Mammary epithelial cell (primary cell): ENCODE measurements at regions of chr11 and their contacts with region 1.

Region 1: DNA sequence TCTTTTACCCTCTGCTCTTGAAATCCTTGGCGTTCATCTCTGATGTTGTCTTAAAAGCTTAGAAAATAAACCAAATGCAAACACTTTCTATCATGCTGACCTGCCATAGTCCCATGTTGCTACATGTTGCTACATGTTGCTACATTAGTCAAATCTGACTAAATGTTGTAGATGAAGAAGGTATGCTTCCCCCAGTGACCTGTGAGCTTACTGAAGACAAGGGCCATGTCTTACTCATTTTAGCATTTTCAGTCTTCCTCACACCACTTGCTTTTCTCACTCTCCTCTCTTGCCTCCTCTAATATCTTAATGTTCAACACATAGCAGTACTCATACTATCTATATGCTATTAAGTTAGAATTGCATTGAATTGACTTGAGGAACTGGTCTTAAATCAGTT is 346.4 kb upstream of the MTNR1B start:
- DNase-seq: peak; percentile 56
- H3K4me3 ChIP-seq: no peak overlapping the region
- H3K27ac ChIP-seq: no peak overlapping the region
- H3K4me1 ChIP-seq: no peaks in the 10 kb centered on the region
- H3K27me3 ChIP-seq: no peaks in the 10 kb centered on the region
- CTCF ChIP-seq: no peak

Region 2: GRCh38 chr11:92605667-92606066 is 17.4 kb before region 1 on chr11:
- CTCF ChIA-PET with region 1: no interaction called
- dilution Hi-C with region 1: no loop called
- in situ Hi-C with region 1: no loop called
- intact Hi-C with region 1: no loop called
- DNase-seq: no peak
- H3K4me3 ChIP-seq: no peak overlapping the region
- H3K27ac ChIP-seq: no peak overlapping the region
- H3K4me1 ChIP-seq: no peaks in the 10 kb centered on the region
- H3K27me3 ChIP-seq: no peaks in the 10 kb centered on the region
- CTCF ChIP-seq: no peak

Region 3: DNA sequence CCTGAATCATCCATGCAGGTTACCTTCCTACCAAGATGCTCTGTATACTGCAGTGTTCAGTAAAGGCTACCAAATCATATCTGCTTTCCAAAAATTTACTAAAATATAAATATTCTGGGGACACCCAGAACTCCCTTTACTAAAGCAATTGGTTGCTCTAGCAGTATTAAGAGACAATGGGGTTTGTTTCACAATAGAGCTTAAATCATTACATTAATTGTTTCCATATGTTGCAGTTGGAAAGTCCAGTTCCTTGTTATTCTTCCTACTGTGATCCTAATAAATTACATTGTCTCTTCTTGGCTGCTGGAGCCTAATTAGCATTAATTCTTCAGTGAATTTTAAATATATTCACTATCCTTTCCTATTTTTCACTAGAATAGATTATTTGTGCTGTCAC is 30.4 kb after region 1 on chr11:
- CTCF ChIA-PET with region 1: no interaction called
- dilution Hi-C with region 1: no loop called
- in situ Hi-C with region 1: no loop called
- intact Hi-C with region 1: no loop called
- DNase-seq: no peak
- H3K4me3 ChIP-seq: no peak overlapping the region
- H3K27ac ChIP-seq: no peak overlapping the region
- H3K4me1 ChIP-seq: no peaks in the 10 kb centered on the region
- H3K27me3 ChIP-seq: no peaks in the 10 kb centered on the region
- CTCF ChIP-seq: no peak

Region 4: DNA sequence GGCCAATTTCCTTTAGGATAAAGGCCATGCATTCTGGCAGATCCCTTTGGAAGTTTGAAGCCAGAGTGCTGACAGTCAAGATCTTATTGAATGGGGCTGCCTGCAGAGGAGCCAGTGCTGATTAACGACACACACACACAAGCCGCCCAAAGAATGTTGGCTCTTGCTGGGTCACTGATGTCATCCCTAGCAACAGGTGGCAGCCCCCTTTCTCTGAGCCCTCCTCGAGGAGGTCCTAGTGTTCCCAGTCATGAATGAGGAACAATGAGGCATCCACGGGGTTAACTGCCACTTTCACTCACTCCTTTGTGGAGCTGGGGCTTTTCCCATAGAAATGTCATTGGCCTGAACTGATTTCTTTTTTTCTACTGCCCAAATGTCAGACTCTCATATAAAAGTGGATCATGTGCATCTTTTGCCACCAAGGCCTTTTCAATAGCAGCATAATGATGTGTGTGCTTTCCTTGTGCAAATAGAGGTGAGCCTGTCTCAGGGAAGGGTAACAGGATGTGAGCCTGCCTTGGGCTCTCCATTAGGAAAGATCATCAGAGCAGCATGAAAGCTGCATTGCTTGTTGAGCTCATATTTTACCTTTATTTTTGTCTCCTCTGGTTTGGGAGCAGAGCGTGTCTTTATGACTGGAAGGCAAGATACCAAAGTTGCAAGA is 44.6 kb after region 1 on chr11:
- CTCF ChIA-PET with region 1: no interaction called
- dilution Hi-C with region 1: loop called (anchors 5 kb)
- in situ Hi-C with region 1: no loop called
- intact Hi-C with region 1: no loop called
- DNase-seq: no peak
- H3K4me3 ChIP-seq: no peak overlapping the region
- H3K27ac ChIP-seq: no peak overlapping the region
- H3K4me1 ChIP-seq: no peaks in the 10 kb centered on the region
- H3K27me3 ChIP-seq: no peaks in the 10 kb centered on the region
- CTCF ChIP-seq: no peak

Region 5: DNA sequence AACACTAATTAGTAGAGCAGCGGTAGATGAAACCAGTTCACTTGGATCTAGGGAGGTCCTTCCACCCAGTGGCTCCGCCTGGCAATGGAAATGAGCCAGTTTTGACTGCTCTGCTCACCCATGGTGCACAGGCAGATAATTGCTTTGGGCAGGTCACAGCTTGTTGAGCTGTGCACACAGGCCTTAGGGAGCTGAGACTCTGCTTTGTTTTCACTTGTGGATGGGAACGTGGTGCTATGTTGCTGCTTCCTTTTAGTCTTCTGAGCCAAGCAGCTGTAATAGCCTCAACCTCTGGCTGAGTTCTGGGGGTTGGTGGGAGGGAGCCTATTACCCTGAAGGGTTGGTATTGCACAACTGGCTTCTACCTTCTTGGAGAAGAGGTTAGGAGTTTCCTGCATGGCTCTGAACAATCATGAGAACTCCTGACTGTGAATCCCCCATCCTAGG is 84.1 kb after region 1 on chr11:
- CTCF ChIA-PET with region 1: no interaction called
- dilution Hi-C with region 1: no loop called
- in situ Hi-C with region 1: no loop called
- intact Hi-C with region 1: no loop called
- DNase-seq: peak; percentile 98
- H3K4me3 ChIP-seq: no peak overlapping the region
- H3K27ac ChIP-seq: peak overlapping the region; percentile 44
- H3K4me1 ChIP-seq: peaks cover 37% of the 10 kb centered on the region
- H3K27me3 ChIP-seq: no peaks in the 10 kb centered on the region
- CTCF ChIP-seq: no peak

Region 6: DNA sequence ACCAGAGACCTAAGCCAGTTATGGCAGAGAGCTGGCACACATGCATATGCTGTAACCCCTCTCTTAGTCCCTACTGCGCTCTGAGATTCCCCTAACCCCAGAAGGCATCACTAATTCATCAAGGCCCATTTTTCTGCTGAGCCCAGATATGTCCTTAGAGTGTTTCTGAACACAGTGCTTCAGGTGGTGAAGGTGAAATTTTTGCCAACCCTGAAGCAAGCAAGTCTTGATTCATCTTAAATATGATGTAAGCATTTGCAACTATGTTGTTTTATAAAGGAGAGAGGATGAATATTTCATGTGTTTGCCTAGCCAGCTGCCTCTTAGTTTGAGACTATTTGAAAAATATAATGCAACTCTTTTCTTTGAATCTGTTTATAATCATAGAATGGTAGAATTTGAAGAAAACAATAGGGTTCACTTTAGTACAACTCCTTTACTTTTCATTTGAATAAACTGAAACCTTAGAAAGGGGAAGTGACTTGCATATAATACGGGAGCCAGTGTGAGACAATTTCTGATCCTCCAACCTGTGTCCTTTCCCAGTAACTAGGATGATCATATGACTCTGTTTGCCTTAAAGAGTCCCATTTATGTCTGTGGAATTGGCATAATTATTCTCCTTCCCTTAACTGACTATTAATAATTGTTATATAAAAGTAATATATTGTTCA is 152.1 kb after region 1 on chr11:
- CTCF ChIA-PET with region 1: no interaction called
- dilution Hi-C with region 1: no loop called
- in situ Hi-C with region 1: no loop called
- intact Hi-C with region 1: no loop called
- DNase-seq: no peak
- H3K4me3 ChIP-seq: no peak overlapping the region
- H3K27ac ChIP-seq: no peak overlapping the region
- H3K4me1 ChIP-seq: no peaks in the 10 kb centered on the region
- H3K27me3 ChIP-seq: peaks cover 3% of the 10 kb centered on the region
- CTCF ChIP-seq: no peak